GM12878 (cell line): ENCODE measurements at regions of chr5 and their contacts with region 1.

Region 1: DNA sequence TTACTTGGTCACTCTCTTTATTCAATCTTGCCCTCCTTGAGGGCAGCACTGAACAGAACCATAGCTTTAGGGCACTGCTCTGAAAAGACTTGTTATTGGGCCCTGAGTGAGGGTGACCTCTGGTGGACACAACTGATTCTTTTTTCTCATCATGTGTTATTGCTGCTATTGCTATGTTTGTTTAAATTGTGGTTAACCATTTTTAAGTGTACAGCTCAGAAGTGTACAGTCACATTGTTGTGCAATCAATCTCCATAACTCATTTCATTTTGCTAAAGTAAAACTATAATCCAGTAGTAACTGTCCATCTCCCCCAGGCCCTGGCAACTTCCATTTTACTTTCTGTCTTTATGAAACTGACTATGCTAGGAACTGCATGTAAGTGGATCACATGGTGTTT is 351.1 kb upstream of the RIOK2 start:
- DNase-seq: no peak
- ATAC-seq: peak; percentile 90
- H3K4me3 ChIP-seq: no peak overlapping the region
- H3K27ac ChIP-seq: no peak overlapping the region
- H3K4me1 ChIP-seq: no peaks in the 10 kb centered on the region
- H3K27me3 ChIP-seq: no peaks in the 10 kb centered on the region
- CTCF ChIP-seq: peak; percentile 57 to 66 (median 59); a peak in 5 of 6 replicates
- EP300 ChIP-seq: no peak
- POLR2A ChIP-seq: no peak
- RAD21 ChIP-seq: peak; percentile 85

Region 2: GRCh38 chr5:97231025-97231636 is 303.0 kb before region 1 on chr5:
- CTCF ChIA-PET with region 1: interaction called, 56 read pairs
- POLR2A ChIA-PET with region 1: no interaction called
- RAD21 ChIA-PET with region 1: interaction called, 33 read pairs
- SMC1A ChIA-PET with region 1: interaction called, 38 read pairs
- in situ Hi-C with region 1: no loop called
- intact Hi-C with region 1: loop called (anchors 1 kb)
- DNase-seq: peak; percentile 20
- ATAC-seq: peak; percentile 94
- H3K4me3 ChIP-seq: no peak overlapping the region
- H3K27ac ChIP-seq: no peak overlapping the region
- H3K4me1 ChIP-seq: no peaks in the 10 kb centered on the region
- H3K27me3 ChIP-seq: no peaks in the 10 kb centered on the region
- CTCF ChIP-seq: peak; percentile 61 to 76 (median 73)
- EP300 ChIP-seq: no peak
- POLR2A ChIP-seq: no peak
- RAD21 ChIP-seq: peak; percentile 83

Region 3: DNA sequence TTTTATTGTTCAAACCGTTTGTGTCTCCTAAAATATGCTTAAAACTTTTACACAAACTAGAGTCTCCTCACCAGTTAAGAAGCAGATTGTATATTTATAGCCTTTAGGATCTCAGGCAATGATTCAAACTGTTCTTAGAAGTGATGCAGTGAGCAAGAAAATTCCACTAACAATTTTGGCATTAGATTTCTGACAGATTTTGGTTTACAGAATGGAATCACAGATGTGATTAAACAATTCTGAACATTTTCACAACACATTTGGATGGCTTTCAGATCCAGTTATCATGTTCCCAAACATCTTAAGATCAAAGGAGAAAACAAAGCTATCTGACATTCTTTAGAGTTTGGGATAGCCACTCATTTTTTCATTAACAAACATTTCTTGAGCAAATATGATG is 169.4 kb before region 1 on chr5:
- CTCF ChIA-PET with region 1: interaction called, 7 read pairs
- POLR2A ChIA-PET with region 1: no interaction called
- RAD21 ChIA-PET with region 1: interaction called, 7 read pairs
- SMC1A ChIA-PET with region 1: interaction called, 12 read pairs
- in situ Hi-C with region 1: no loop called
- intact Hi-C with region 1: no loop called
- DNase-seq: no peak
- ATAC-seq: no peak
- H3K4me3 ChIP-seq: no peak overlapping the region
- H3K27ac ChIP-seq: no peak overlapping the region
- H3K4me1 ChIP-seq: peaks cover 5% of the 10 kb centered on the region; the same call in 1 of the 2 replicates
- H3K27me3 ChIP-seq: no peaks in the 10 kb centered on the region
- CTCF ChIP-seq: no peak
- EP300 ChIP-seq: no peak
- POLR2A ChIP-seq: no peak
- RAD21 ChIP-seq: no peak

Region 4: GRCh38 chr5:97478483-97478882 is 55.7 kb before region 1 on chr5:
- CTCF ChIA-PET with region 1: interaction called, 9 read pairs
- POLR2A ChIA-PET with region 1: no interaction called
- RAD21 ChIA-PET with region 1: interaction called, 8 read pairs
- SMC1A ChIA-PET with region 1: interaction called, 30 read pairs
- in situ Hi-C with region 1: no loop called
- intact Hi-C with region 1: no loop called
- DNase-seq: no peak
- ATAC-seq: no peak
- H3K4me3 ChIP-seq: no peak overlapping the region
- H3K27ac ChIP-seq: peak overlapping the region; percentile 9; the same call in 1 of the 2 replicates
- H3K4me1 ChIP-seq: peaks cover 20% of the 10 kb centered on the region
- H3K27me3 ChIP-seq: no peaks in the 10 kb centered on the region
- CTCF ChIP-seq: no peak
- EP300 ChIP-seq: no peak
- POLR2A ChIP-seq: no peak
- RAD21 ChIP-seq: no peak

Region 5: DNA sequence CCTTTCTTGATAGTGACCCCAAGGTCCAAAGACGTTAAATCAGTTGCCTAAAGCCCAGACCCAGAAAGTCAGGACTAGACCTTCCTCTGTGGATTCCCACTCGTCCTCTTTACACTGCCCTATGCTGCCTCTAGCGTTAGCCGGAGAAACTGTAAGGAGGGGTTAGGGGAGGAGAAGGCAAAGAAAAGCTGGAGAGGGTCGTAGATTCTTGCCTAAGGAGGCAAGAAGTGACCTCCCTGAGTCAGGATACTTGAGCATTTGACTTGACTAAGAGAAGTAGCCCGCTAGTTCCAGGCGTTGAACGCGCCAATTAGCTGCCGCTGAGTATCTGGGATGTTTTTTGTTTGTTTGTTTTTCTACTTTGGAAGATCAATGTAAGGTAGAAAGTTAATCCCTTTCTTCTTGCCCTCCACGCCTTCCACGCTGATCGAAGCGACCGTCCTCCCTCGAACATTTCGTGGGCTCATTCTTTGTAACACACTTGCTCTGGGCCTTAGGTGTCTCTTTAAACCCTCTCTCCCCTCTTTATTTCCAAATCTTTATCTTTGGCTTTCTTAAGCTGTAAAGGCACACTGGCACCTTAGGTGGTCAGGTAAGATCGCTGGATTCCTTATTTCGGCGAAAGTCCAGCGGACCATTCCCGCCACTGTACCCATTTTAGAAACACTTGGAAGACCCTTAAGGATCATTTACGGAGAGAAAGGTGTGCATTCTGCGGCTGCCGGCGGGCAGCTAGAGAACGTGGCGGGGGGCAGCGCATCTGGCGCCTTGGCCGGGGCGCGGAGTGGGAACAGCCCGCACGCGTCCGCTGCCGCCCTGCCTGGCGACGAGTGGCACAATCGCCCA is 1234.2 kb after region 1 on chr5:
- CTCF ChIA-PET with region 1: interaction called, 16 read pairs
- POLR2A ChIA-PET with region 1: no interaction called
- RAD21 ChIA-PET with region 1: no interaction called
- SMC1A ChIA-PET with region 1: interaction called, 9 read pairs
- in situ Hi-C with region 1: no loop called
- intact Hi-C with region 1: loop called (anchors 5 kb)
- DNase-seq: no peak
- ATAC-seq: peak; percentile 37
- H3K4me3 ChIP-seq: peak overlapping the region; percentile 79
- H3K27ac ChIP-seq: no peak overlapping the region
- H3K4me1 ChIP-seq: peaks cover 12% of the 10 kb centered on the region
- H3K27me3 ChIP-seq: peaks cover 3 to 9% of the 10 kb centered on the region in 2 experiments; a peak in 3 of 4 replicates
- CTCF ChIP-seq: peak; percentile 82 to 98 (median 93)
- EP300 ChIP-seq: no peak
- POLR2A ChIP-seq: no peak
- RAD21 ChIP-seq: peak; percentile 89